Endothelial cell of umbilical vein (primary cell): ENCODE measurements at regions of chr5 and their contacts with region 1.

Region 1: GRCh38 chr5:157130925-157131324 is 11.7 kb downstream of the MED7 start:
- DNase-seq: no peak
- H3K4me3 ChIP-seq: no peak overlapping the region
- H3K27ac ChIP-seq: no peak overlapping the region
- H3K4me1 ChIP-seq: no peaks in the 10 kb centered on the region
- H3K27me3 ChIP-seq: no peaks in the 10 kb centered on the region
- CTCF ChIP-seq: no peak
- POLR2A ChIP-seq: no peak

Region 2: DNA sequence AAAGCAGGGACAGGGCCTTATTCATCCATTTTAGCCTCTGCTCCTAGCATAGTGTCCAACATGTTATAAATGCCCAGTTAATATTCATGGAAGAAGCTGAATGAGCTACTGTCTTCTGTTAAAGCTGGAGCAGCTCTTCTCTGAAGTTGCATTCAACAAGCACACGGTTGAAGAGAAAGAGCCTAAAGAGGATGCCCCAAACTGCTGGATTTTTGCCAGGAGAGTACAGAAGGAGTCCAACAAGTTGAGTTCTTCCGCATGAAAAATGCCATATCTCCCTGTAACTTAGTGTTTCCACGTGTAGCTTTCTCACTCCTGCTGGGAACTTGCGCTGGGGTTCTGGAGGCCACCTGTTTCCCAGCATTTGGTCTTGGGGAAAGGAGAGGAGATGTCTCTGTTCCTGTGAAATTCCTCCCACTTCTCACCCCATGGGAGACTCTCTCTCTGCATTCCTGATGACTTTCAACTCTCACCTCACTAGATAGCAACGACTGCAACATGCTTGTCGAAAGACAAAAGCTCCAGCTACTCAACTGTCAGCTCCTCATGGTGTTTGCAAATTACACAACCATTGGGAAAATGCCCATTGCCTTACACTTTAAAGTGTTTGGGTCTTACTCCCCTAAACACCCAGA is 1994.6 kb before region 1 on chr5:
- CTCF ChIA-PET with region 1: interaction called, 44 read pairs
- POLR2A ChIA-PET with region 1: no interaction called
- dilution Hi-C with region 1: no loop called
- intact Hi-C with region 1: no loop called
- DNase-seq: no peak
- H3K4me3 ChIP-seq: no peak overlapping the region
- H3K27ac ChIP-seq: no peak overlapping the region
- H3K4me1 ChIP-seq: no peaks in the 10 kb centered on the region
- H3K27me3 ChIP-seq: peaks cover 0 to 2% of the 10 kb centered on the region in 2 experiments
- CTCF ChIP-seq: no peak
- POLR2A ChIP-seq: no peak

Region 3: GRCh38 chr5:156686796-156687195 is 444.1 kb before region 1 on chr5:
- CTCF ChIA-PET with region 1: no interaction called
- POLR2A ChIA-PET with region 1: no interaction called
- dilution Hi-C with region 1: no loop called
- intact Hi-C with region 1: no loop called
- DNase-seq: no peak
- H3K4me3 ChIP-seq: no peak overlapping the region
- H3K27ac ChIP-seq: no peak overlapping the region
- H3K4me1 ChIP-seq: no peaks in the 10 kb centered on the region
- H3K27me3 ChIP-seq: no peaks in the 10 kb centered on the region
- CTCF ChIP-seq: no peak
- POLR2A ChIP-seq: no peak

Region 4: GRCh38 chr5:157142317-157143126 is 11.6 kb after region 1 on chr5 and contains the start of gene MED7:
- CTCF ChIA-PET with region 1: interaction called, 13 read pairs
- POLR2A ChIA-PET with region 1: interaction called, 3 read pairs
- dilution Hi-C with region 1: no loop called
- intact Hi-C with region 1: no loop called
- DNase-seq: peak; percentile 99
- H3K4me3 ChIP-seq: peak within 1 kb of the TSS; percentile 77 to 90 (median 79)
- H3K27ac ChIP-seq: peak within 1 kb of the TSS; percentile 79
- H3K4me1 ChIP-seq: peaks cover 6% of the 10 kb centered on the region
- H3K27me3 ChIP-seq: no peaks in the 10 kb centered on the region
- CTCF ChIP-seq: no peak
- POLR2A ChIP-seq: peak; percentile 80
- total RNA-seq, gene MED7: 7.4 and 9.2 TPM in 2 replicates

Region 5: GRCh38 chr5:157148734-157149615 is 18.1 kb after region 1 on chr5:
- CTCF ChIA-PET with region 1: interaction called, 14 read pairs
- POLR2A ChIA-PET with region 1: no interaction called
- dilution Hi-C with region 1: no loop called
- intact Hi-C with region 1: no loop called
- DNase-seq: peak; percentile 59
- H3K4me3 ChIP-seq: no peak overlapping the region
- H3K27ac ChIP-seq: no peak overlapping the region
- H3K4me1 ChIP-seq: no peaks in the 10 kb centered on the region
- H3K27me3 ChIP-seq: no peaks in the 10 kb centered on the region
- CTCF ChIP-seq: peak; percentile 80 to 81
- POLR2A ChIP-seq: no peak

Region 6: GRCh38 chr5:157748760-157749461 is 618.0 kb after region 1 on chr5:
- CTCF ChIA-PET with region 1: no interaction called
- POLR2A ChIA-PET with region 1: interaction called, 10 read pairs
- dilution Hi-C with region 1: no loop called
- intact Hi-C with region 1: no loop called
- DNase-seq: no peak
- H3K4me3 ChIP-seq: no peak overlapping the region
- H3K27ac ChIP-seq: no peak overlapping the region
- H3K4me1 ChIP-seq: peaks cover 18% of the 10 kb centered on the region
- H3K27me3 ChIP-seq: no peaks in the 10 kb centered on the region
- CTCF ChIP-seq: no peak
- POLR2A ChIP-seq: no peak

Region 7: DNA sequence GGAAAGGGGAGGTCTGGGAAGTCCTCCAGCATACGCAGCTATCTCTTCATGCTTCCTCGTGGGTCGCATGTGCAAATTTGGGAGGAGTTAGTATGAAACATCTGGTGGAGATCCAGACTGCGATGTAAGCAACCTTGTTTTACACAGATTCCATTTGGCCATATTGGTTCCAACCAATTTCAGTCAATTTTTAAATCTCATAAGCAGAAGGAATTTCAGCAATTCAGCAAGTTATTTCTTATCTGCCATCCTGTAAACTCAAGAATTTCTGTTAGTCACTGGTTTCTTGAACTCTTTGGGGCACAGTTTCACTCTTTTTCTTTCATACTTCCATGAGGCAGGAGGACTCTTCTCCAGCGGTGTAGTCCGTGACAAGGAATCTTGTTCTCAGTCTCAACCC is 858.4 kb after region 1 on chr5:
- CTCF ChIA-PET with region 1: no interaction called
- POLR2A ChIA-PET with region 1: no interaction called
- dilution Hi-C with region 1: no loop called
- intact Hi-C with region 1: no loop called
- DNase-seq: no peak
- H3K4me3 ChIP-seq: no peak overlapping the region
- H3K27ac ChIP-seq: no peak overlapping the region
- H3K4me1 ChIP-seq: no peaks in the 10 kb centered on the region
- H3K27me3 ChIP-seq: peaks cover 0 to 2% of the 10 kb centered on the region in 2 experiments
- CTCF ChIP-seq: no peak
- POLR2A ChIP-seq: no peak